ENCODE measurements at regions of chr10 and their contacts with region 1.

Region 1: GRCh38 chr10:44932517-44933450 is 21.6 kb downstream of the TMEM72 start:
- DNase-seq: peak; percentile 56
- ATAC-seq: peak; percentile 99
- H3K4me3 ChIP-seq: no peak overlapping the region
- H3K27ac ChIP-seq: no peak overlapping the region
- H3K4me1 ChIP-seq: no peaks in the 10 kb centered on the region
- H3K27me3 ChIP-seq: no peaks in the 10 kb centered on the region
- CTCF ChIP-seq: peak; percentile 87 to 99 (median 96)
- POLR2A ChIP-seq: no peak
- RAD21 ChIP-seq: peak; percentile 94

Region 2: GRCh38 chr10:44947371-44948152 is 14.8 kb after region 1 on chr10:
- CTCF ChIA-PET with region 1: interaction called, 10 read pairs
- POLR2A ChIA-PET with region 1: no interaction called
- RAD21 ChIA-PET with region 1: no interaction called
- intact Hi-C with region 1: no loop called
- DNase-seq: no peak
- ATAC-seq: no peak
- H3K4me3 ChIP-seq: no peak overlapping the region
- H3K27ac ChIP-seq: no peak overlapping the region
- H3K4me1 ChIP-seq: no peaks in the 10 kb centered on the region
- H3K27me3 ChIP-seq: no peaks in the 10 kb centered on the region
- CTCF ChIP-seq: no peak
- POLR2A ChIP-seq: no peak
- RAD21 ChIP-seq: no peak

Region 3: DNA sequence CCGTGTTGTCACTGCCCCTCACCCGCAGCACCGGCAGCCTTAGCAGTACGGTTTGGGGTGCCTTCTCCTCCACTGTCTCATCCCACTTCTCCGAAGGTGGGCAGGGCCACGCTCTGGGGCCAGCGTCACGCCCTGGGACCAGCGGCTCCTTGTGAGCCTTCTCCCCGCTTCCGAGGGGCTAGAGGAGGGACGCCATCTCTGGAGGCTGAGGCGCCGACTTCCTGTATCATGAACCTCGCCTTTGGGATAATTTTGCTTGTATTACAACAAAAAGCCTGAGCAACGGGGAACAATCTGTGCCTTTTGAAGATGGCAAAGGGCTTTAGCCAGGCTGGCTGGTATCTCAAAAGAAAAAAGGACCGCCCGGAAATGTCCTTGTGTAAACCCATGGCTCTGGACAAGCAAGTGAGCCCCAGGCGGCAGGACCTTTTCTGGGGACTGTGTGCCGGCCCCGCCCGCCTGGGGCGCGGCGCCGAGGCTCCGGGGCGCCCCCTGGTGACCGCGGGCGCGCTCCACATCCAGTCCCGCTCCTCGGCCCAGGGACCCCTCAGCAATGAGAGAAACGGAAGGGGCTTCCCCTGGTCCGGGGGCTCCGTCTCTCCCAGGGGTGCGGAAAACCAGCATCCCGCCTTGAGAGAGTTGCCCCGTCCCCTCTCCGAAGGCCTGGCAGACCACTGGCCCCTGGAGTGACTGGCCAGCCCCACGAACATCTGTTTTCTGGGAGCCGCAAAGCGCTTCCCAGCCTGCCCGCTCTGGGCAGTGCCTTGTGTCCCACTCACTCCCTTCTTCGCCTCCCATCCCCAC is 42.0 kb after region 1 on chr10:
- CTCF ChIA-PET with region 1: interaction called, 14 read pairs
- POLR2A ChIA-PET with region 1: interaction called, 7 read pairs
- RAD21 ChIA-PET with region 1: interaction called in 1 of 2 experiments, 4 read pairs
- intact Hi-C with region 1: loop called (anchors 1 kb)
- DNase-seq: peak; percentile 13
- ATAC-seq: peak; percentile 84
- H3K4me3 ChIP-seq: peak overlapping the region; percentile 40 to 54
- H3K27ac ChIP-seq: peak overlapping the region; percentile 54; the same call in 1 of the 2 replicates
- H3K4me1 ChIP-seq: peaks cover 34 to 45% of the 10 kb centered on the region in 2 experiments
- H3K27me3 ChIP-seq: no peaks in the 10 kb centered on the region
- CTCF ChIP-seq: peak; percentile 68 to 96 (median 83)
- POLR2A ChIP-seq: no peak
- RAD21 ChIP-seq: no peak; the same call in none of the 2 replicates

Region 4: GRCh38 chr10:44990302-44990655 is 57.5 kb after region 1 on chr10:
- CTCF ChIA-PET with region 1: interaction called, 9 read pairs
- POLR2A ChIA-PET with region 1: no interaction called
- RAD21 ChIA-PET with region 1: interaction called in 1 of 2 experiments, 4 read pairs
- intact Hi-C with region 1: loop called (anchors 1 kb)
- DNase-seq: no peak
- ATAC-seq: peak; percentile 78
- H3K4me3 ChIP-seq: no peak overlapping the region
- H3K27ac ChIP-seq: no peak overlapping the region
- H3K4me1 ChIP-seq: no peaks in the 10 kb centered on the region
- H3K27me3 ChIP-seq: no peaks in the 10 kb centered on the region
- CTCF ChIP-seq: peak; percentile 27 to 41 (median 30); a peak in 4 of 6 replicates
- POLR2A ChIP-seq: no peak
- RAD21 ChIP-seq: peak; percentile 70

Measured in HCT116 (cell line).